CD8-positive, alpha-beta T cell (primary cell): ENCODE measurements at regions of chr22 and their contacts with region 1.

Region 1: GRCh38 chr22:39414886-39415285 is 15.3 kb downstream of the TAB1 start:
- DNase-seq: no peak
- ATAC-seq: no peak
- H3K4me3 ChIP-seq: peak overlapping the region; percentile 0 to 17
- H3K4me3 Mint-ChIP-seq: peak overlapping the region; percentile 63
- H3K27ac ChIP-seq: no peak overlapping the region
- H3K27ac Mint-ChIP-seq: peak overlapping the region; percentile 75
- H3K4me1 ChIP-seq: peaks cover 68% of the 10 kb centered on the region
- H3K4me1 Mint-ChIP-seq: peaks cover 62% of the 10 kb centered on the region
- H3K27me3 ChIP-seq: no peaks in the 10 kb centered on the region
- H3K27me3 Mint-ChIP-seq: no peaks in the 10 kb centered on the region
- CTCF ChIP-seq: no peak

Region 2: GRCh38 chr22:39403271-39403670 is 11.6 kb before region 1 on chr22:
- CTCF ChIA-PET with region 1: interaction called, 5 read pairs
- POLR2A ChIA-PET with region 1: interaction called, 20 read pairs
- intact Hi-C with region 1: loop called (anchors 1 kb)
- DNase-seq: no peak
- ATAC-seq: no peak
- H3K4me3 ChIP-seq: no peak overlapping the region
- H3K4me3 Mint-ChIP-seq: no peak overlapping the region
- H3K27ac ChIP-seq: no peak overlapping the region
- H3K27ac Mint-ChIP-seq: no peak overlapping the region
- H3K4me1 ChIP-seq: peaks cover 43% of the 10 kb centered on the region
- H3K4me1 Mint-ChIP-seq: peaks cover 54% of the 10 kb centered on the region
- H3K27me3 ChIP-seq: no peaks in the 10 kb centered on the region
- H3K27me3 Mint-ChIP-seq: no peaks in the 10 kb centered on the region
- CTCF ChIP-seq: no peak

Region 3: DNA sequence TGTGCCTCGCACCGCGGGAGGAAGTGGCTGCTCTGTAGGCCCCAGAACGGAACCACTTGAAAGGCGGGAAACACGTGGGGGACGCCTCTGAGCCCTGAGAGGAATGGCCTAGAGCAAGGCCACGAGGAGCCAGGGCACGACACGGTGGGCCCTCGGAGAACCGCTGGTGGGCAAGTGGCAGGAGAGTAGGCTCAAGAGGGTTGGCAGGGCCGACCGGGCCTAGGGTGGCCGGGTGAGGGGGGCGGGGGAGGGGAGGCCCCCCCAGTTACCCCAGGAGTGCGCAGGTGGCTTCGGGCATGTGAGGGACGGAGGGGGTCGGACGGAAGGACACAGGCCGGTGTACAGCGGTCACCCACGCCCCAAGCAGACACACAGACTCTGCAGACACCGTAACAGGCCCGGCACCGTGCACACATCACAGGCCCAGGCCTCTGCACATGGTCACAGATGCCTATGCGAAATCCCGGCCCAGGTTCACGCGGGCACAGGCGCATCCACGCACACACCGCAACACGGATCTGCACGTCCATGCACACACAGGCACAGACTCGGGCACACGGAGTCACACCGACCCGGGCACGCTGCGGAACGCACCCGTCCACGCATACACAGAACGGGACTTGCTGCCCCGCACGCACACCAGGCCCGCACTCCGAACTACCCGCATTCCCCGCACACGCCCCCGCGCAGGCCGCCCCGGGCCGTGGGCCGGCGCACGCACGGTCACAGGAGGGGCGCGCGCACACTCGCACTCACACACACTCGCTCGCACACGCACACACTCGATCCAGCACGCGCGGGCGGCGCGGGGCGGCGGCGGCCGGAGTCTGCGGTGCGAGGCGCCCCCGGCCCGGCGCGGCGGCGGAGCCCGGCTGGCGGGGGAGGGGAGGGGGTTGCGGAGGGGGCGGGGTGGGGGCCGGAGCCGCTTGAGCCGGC is 41.6 kb after region 1 on chr22 and contains the start of gene MGAT3:
- CTCF ChIA-PET with region 1: no interaction called
- POLR2A ChIA-PET with region 1: no interaction called
- intact Hi-C with region 1: loop called in 1 of 2 experiments (anchors 5 kb)
- DNase-seq: peak in 8 of 9 experiments; percentile 26 to 77 (median 48)
- ATAC-seq: peak; percentile 68
- H3K4me3 ChIP-seq: peak within 1 kb of the TSS in 1 of 2 experiments; percentile 41
- H3K4me3 Mint-ChIP-seq: peak within 1 kb of the TSS; percentile 77
- H3K27ac ChIP-seq: no peak within 1 kb of the TSS
- H3K27ac Mint-ChIP-seq: no peak within 1 kb of the TSS
- H3K4me1 ChIP-seq: peaks cover 21% of the 10 kb centered on the region
- H3K4me1 Mint-ChIP-seq: peaks cover 27% of the 10 kb centered on the region
- H3K27me3 ChIP-seq: peaks cover 7 to 19% of the 10 kb centered on the region in 2 experiments
- H3K27me3 Mint-ChIP-seq: peaks cover 27% of the 10 kb centered on the region
- CTCF ChIP-seq: no peak
- total RNA-seq, gene MGAT3: 0.05 TPM in 1 of 2 experiments, not detected in the other